Activated CD4-positive, alpha-beta memory T cell treated with anti-CD3 and anti-CD28 coated beads, Interleukin-2, amount 10 ng/mL, durations not matched to agents 7 days and 5 days (primary cell): ENCODE measurements at regions of chr17 and their contacts with region 1.

Region 1: DNA sequence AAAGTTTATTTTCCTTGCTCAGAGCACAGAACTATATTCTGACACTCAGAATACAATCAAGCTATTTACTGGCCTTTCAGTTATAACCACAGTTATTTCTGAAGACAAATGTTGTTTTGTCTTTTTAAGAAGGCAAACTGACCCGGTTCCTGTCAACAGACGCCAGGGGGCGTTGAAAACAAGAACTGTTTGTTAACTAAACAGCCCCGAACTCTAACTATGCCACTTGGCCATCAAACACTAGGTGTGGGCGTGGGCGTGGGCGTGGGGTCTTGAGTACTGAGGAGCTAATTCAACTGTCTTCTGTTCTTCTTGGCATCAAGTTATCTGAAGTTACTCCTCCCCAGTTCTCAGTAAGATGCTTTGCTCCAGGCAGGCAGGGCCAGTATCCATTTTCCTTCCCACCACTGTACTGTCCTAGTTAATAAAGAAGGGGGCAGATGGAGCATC is 63.2 kb upstream of the MTMR4 start:
- DNase-seq: peak; percentile 60
- H3K4me3 Mint-ChIP-seq: no peak overlapping the region
- H3K27ac Mint-ChIP-seq: no peak overlapping the region
- H3K4me1 Mint-ChIP-seq: peaks cover 4% of the 10 kb centered on the region
- H3K27me3 Mint-ChIP-seq: no peaks in the 10 kb centered on the region

Region 2: GRCh38 chr17:58487589-58488427 is 89.9 kb before region 1 on chr17 and contains the start of gene HSF5:
- CTCF ChIA-PET with region 1: no interaction called
- POLR2A ChIA-PET with region 1: no interaction called
- DNase-seq: peak; percentile 75
- H3K4me3 Mint-ChIP-seq: peak within 1 kb of the TSS; percentile 30
- H3K27ac Mint-ChIP-seq: no peak within 1 kb of the TSS
- H3K4me1 Mint-ChIP-seq: peaks cover 17% of the 10 kb centered on the region
- H3K27me3 Mint-ChIP-seq: no peaks in the 10 kb centered on the region
- total RNA-seq, gene HSF5: 0.40 to 0.70 TPM

Region 3: DNA sequence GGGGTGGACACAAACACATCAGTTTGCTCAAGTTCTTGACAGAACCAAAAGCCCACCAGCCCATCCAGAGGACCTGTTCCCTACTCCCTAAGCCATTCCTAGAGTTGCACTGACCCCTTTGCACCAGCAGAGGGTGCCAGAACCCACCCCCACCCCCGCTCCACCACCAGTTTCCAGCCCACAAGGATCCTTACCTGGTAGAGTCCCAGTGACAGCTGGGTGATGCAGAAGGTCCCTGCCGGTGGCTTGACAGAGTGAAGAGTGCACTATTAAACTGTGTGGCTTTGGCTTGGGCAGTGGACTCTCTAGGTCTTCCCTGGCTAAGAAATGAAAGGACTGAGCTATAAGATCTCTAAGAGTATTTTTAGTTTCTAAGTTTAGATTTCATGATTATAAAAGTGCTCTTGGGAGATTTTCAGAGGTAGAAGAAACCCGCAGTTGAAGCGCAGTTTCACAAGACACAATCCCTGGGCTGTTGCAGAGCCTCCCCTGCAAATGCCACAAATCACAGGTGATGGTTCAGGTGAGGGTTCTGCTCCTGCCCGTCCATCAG is 10.1 kb after region 1 on chr17:
- CTCF ChIA-PET with region 1: interaction called, 24 read pairs
- POLR2A ChIA-PET with region 1: no interaction called
- DNase-seq: peak; percentile 63
- H3K4me3 Mint-ChIP-seq: no peak overlapping the region
- H3K27ac Mint-ChIP-seq: no peak overlapping the region
- H3K4me1 Mint-ChIP-seq: peaks cover 4% of the 10 kb centered on the region
- H3K27me3 Mint-ChIP-seq: peaks cover 2% of the 10 kb centered on the region